ENCODE measurements at regions of chr22 and their contacts with region 1.

Region 1: GRCh38 chr22:30920407-30920806 is 48.2 kb downstream of the MORC2 start:
- DNase-seq: peak; percentile 90
- H3K4me3 ChIP-seq: no peak overlapping the region
- H3K27ac ChIP-seq: no peak overlapping the region
- H3K4me1 ChIP-seq: peaks cover 5% of the 10 kb centered on the region
- H3K27me3 ChIP-seq: no peaks in the 10 kb centered on the region
- CTCF ChIP-seq: peak; percentile 77 to 86 (median 84)
- POLR2A ChIP-seq: no peak

Region 2: GRCh38 chr22:30634471-30635233 is 285.8 kb before region 1 on chr22:
- intact Hi-C with region 1: loop called (anchors 10 kb)
- DNase-seq: peak; percentile 91
- H3K4me3 ChIP-seq: peak overlapping the region; percentile 61 to 68
- H3K27ac ChIP-seq: peak overlapping the region; percentile 61 to 94
- H3K4me1 ChIP-seq: peaks cover 19% of the 10 kb centered on the region
- H3K27me3 ChIP-seq: no peaks in the 10 kb centered on the region
- CTCF ChIP-seq: peak; percentile 97 to 98 (median 97)
- POLR2A ChIP-seq: no peak

Region 3: DNA sequence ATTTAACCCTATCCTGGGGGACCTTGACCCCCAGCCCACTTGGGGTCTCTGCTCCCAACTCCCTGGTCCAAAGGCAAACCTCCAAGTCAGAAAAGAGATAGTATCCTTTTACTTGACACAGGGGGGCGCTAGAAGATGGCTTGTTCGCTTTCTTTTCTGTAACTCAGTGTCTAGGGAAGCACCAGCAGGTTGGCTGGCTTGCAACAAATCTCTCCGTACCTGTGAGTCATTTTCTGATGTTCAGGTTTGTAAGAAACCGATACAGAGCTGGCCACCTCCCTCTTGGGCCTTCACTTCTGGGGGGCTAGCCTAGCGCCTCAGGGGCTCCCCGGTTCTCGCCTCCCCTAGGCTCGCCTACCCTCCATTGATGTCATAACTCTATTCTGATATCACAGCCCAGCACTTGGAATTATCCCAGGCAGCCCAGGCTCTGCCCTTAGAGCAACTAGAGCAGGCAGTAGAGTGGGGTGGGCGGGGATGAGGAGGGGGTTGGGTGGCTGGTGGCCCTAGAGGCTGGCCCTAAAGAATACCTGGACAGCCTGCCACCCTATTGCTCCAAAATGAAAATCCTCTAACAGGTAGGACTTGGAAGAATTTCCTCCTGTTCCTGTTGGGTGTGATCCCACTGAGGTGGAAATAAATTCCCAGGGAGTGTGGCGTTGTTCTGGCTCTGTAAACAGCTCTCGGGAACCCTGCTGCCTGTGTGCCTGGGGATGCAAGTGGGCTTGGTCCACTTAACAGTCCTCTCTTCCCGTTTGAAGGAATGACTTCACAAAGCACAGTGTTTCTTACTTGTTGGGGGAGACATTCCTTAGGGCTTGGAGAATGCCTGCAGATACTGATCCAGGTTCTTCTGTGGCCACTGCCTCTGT is 156.4 kb before region 1 on chr22:
- intact Hi-C with region 1: loop called (anchors 10 kb)
- DNase-seq: peak; percentile 62
- H3K4me3 ChIP-seq: no peak overlapping the region
- H3K27ac ChIP-seq: no peak overlapping the region
- H3K4me1 ChIP-seq: no peaks in the 10 kb centered on the region
- H3K27me3 ChIP-seq: no peaks in the 10 kb centered on the region
- CTCF ChIP-seq: peak; percentile 22 to 58 (median 43)
- POLR2A ChIP-seq: no peak

Region 4: DNA sequence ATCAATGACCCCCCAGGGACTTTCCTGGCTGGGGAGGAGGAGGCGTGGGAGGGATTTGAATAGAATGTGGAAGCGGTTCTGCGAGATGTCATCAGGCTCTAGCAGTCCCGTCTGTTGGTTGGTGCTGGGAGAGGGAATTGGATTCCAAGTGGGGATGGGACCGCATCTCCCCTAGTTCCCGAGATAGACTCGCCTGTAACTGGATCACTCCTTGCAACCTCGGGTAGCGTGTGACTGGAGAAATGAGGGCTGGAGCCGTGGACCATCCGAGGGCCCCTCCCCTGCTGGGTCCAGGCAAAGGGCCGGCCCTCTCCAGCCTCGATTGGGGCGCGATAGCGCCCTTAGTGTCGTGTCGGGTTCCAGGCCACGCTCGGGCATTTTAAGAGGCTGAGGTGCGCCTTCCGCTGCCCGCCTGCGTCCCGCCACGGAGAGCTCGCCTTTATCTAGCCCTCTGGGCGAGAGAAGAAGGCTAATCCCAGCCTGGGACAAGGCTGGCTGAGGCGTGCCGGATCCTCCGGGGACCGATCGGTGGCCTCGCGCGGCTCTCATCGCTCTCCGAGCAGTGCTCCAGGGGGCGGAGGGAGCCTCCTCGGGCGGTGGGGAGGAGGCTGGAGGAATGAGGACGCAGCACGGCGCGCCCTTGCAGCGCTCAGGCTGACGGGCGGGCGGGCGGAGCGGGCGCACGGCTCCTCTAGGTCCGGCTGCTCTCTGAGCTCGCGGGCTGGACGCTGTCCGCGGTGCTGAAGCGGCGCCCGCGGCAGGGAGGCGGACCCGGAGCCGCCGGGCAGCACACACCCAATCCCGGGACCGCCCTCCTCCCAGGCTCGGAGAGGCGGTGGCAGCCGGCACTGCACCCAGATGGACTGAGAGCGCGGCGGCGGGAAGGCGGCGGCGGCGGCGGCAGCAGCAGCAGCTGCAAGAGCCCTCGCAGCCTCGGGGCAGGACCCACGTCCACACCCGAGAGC is 117.9 kb before region 1 on chr22:
- intact Hi-C with region 1: no loop called
- DNase-seq: peak; percentile 85
- H3K4me3 ChIP-seq: peak overlapping the region; percentile 12 to 34
- H3K27ac ChIP-seq: no peak overlapping the region
- H3K4me1 ChIP-seq: peaks cover 5% of the 10 kb centered on the region
- H3K27me3 ChIP-seq: no peaks in the 10 kb centered on the region
- CTCF ChIP-seq: peak; percentile 23 to 52 (median 25)
- POLR2A ChIP-seq: no peak